GM10248 (cell line): ENCODE measurements at regions of chr2 and their contacts with region 1.

Region 1: GRCh38 chr2:27723372-27724144 is 48.0 kb upstream of the MRPL33 start:
- DNase-seq: peak; percentile 56
- CTCF ChIP-seq: peak; percentile 53

Region 2: GRCh38 chr2:27591745-27592144 is 131.8 kb before region 1 on chr2:
- CTCF ChIA-PET with region 1: no interaction called
- POLR2A ChIA-PET with region 1: no interaction called
- DNase-seq: no peak
- CTCF ChIP-seq: no peak

Region 3: GRCh38 chr2:27737676-27738348 is 14.3 kb after region 1 on chr2:
- CTCF ChIA-PET with region 1: interaction called, 11 read pairs
- POLR2A ChIA-PET with region 1: no interaction called
- DNase-seq: no peak
- CTCF ChIP-seq: no peak

Region 4: DNA sequence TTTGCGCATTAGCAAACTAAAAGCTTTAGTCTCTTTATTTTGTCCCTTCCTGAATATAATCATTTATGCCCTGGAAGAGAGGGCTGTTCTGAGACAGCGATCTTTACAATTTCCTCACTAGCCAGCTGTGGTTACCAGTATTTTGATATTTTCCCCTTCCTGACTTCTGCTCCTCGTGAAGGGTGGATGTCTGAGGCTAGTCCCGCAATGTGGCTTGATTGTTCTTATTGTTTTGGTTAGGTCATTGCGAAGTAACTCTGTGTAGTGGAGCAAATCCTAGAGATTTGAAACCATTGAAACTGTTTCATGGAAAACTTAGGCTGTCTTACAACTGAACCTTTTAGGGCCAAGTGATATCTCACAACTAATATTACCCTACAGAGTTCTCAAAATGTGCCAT is 50.4 kb after region 1 on chr2:
- CTCF ChIA-PET with region 1: no interaction called
- POLR2A ChIA-PET with region 1: no interaction called
- DNase-seq: no peak
- CTCF ChIP-seq: no peak